Caco-2 (cell line): ENCODE measurements at regions of chr2 and their contacts with region 1.

Region 1: GRCh38 chr2:109128048-109128465 is 948 bp upstream of the SH3RF3 start:
- DNase-seq: peak; percentile 76 to 88
- H3K4me3 ChIP-seq: peak overlapping the region; percentile 64
- H3K4me3 Mint-ChIP-seq: peak overlapping the region; percentile 84
- H3K27ac Mint-ChIP-seq: no peak overlapping the region
- H3K4me1 ChIP-seq: no peaks in the 10 kb centered on the region; the same call in 1 of the 2 replicates
- H3K4me1 Mint-ChIP-seq: no peaks in the 10 kb centered on the region
- H3K27me3 ChIP-seq: peaks cover 5% of the 10 kb centered on the region
- H3K27me3 Mint-ChIP-seq: peaks cover 8% of the 10 kb centered on the region
- CTCF ChIP-seq: peak; percentile 91

Region 2: GRCh38 chr2:107776362-107776761 is 1351.7 kb before region 1 on chr2:
- CTCF ChIA-PET with region 1: no interaction called
- POLR2A ChIA-PET with region 1: no interaction called
- intact Hi-C with region 1: no loop called
- DNase-seq: no peak
- H3K4me3 ChIP-seq: no peak overlapping the region
- H3K4me3 Mint-ChIP-seq: no peak overlapping the region
- H3K27ac Mint-ChIP-seq: no peak overlapping the region
- H3K4me1 ChIP-seq: no peaks in the 10 kb centered on the region
- H3K4me1 Mint-ChIP-seq: no peaks in the 10 kb centered on the region
- H3K27me3 ChIP-seq: no peaks in the 10 kb centered on the region
- H3K27me3 Mint-ChIP-seq: peaks cover 14% of the 10 kb centered on the region
- CTCF ChIP-seq: no peak

Region 3: DNA sequence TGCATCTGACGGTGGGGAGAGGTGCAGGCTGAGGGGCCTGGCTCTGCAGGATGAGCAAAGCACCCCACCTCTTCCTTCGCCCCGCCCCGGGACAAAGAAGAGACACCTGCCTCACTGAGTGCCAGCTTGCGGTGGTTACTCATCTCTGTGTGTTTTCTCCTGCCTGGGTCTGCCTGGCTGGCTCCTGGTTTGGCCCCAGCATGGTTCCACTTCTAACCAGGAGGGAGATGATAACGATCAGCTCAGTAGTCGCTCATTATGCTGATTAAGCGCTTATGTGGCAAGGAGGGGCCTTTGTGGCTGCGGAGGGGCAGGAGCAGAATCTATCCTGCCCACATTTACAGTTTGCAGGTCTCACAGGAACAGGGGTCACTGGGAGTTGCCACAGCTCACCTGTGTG is 70.4 kb before region 1 on chr2:
- CTCF ChIA-PET with region 1: no interaction called
- POLR2A ChIA-PET with region 1: no interaction called
- intact Hi-C with region 1: no loop called
- DNase-seq: no peak
- H3K4me3 ChIP-seq: no peak overlapping the region
- H3K4me3 Mint-ChIP-seq: no peak overlapping the region
- H3K27ac Mint-ChIP-seq: no peak overlapping the region
- H3K4me1 ChIP-seq: peaks cover 25% of the 10 kb centered on the region
- H3K4me1 Mint-ChIP-seq: peaks cover 23% of the 10 kb centered on the region
- H3K27me3 ChIP-seq: no peaks in the 10 kb centered on the region
- H3K27me3 Mint-ChIP-seq: no peaks in the 10 kb centered on the region
- CTCF ChIP-seq: no peak

Region 4: DNA sequence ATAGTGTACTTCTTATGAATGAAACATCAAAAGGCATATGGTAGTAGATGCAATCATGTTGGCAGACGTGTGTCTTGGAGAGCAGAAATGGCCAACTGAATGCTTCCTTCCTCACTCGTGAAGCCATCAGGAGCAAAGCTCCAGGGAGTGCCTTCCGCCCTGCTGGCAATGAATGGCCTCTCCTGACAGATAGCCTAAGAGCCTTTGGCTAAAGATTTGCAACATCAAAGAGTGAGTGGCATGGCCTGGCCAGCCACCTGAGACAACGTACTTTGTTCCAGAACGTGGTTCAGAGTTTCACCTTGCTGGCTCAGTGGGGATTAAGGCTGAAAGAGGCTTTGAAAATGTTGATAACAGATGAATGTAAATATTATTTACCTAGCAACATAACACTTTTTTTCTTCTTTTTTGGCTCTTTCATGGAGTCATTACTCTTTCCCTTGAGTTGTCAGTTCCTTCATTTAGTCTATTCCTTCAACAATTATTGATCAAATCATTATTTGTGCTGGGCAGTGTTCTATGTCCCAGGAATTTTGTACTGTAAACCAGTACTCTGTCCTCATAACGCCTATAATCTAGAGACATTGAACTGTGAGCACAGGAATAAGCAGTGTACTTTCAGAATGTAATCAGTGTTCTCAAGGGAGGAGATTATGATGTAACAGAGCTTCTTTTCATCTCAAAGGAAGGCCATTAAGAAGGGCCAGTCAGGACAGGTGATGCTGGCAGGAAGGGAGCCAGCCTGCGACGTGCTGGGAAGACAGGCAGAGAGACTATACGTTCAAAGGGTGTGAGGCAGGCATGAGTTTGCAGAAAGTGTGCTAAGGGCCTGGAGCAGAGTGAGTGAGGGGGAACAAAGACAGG is 58.5 kb before region 1 on chr2:
- CTCF ChIA-PET with region 1: no interaction called
- POLR2A ChIA-PET with region 1: no interaction called
- intact Hi-C with region 1: loop called (anchors 1 kb)
- DNase-seq: peak; percentile 90 to 94
- H3K4me3 ChIP-seq: no peak overlapping the region
- H3K4me3 Mint-ChIP-seq: peak overlapping the region; percentile 65
- H3K27ac Mint-ChIP-seq: peak overlapping the region; percentile 97
- H3K4me1 ChIP-seq: peaks cover 58% of the 10 kb centered on the region
- H3K4me1 Mint-ChIP-seq: peaks cover 34% of the 10 kb centered on the region
- H3K27me3 ChIP-seq: no peaks in the 10 kb centered on the region
- H3K27me3 Mint-ChIP-seq: no peaks in the 10 kb centered on the region
- CTCF ChIP-seq: no peak

Region 5: GRCh38 chr2:109208081-109208950 is 80.3 kb after region 1 on chr2:
- CTCF ChIA-PET with region 1: interaction called, 3 read pairs
- POLR2A ChIA-PET with region 1: no interaction called
- intact Hi-C with region 1: loop called (anchors 1 kb)
- DNase-seq: no peak
- H3K4me3 ChIP-seq: no peak overlapping the region
- H3K4me3 Mint-ChIP-seq: no peak overlapping the region
- H3K27ac Mint-ChIP-seq: no peak overlapping the region
- H3K4me1 ChIP-seq: peaks cover 14% of the 10 kb centered on the region
- H3K4me1 Mint-ChIP-seq: peaks cover 11% of the 10 kb centered on the region
- H3K27me3 ChIP-seq: no peaks in the 10 kb centered on the region
- H3K27me3 Mint-ChIP-seq: peaks cover 11% of the 10 kb centered on the region
- CTCF ChIP-seq: no peak

Region 6: DNA sequence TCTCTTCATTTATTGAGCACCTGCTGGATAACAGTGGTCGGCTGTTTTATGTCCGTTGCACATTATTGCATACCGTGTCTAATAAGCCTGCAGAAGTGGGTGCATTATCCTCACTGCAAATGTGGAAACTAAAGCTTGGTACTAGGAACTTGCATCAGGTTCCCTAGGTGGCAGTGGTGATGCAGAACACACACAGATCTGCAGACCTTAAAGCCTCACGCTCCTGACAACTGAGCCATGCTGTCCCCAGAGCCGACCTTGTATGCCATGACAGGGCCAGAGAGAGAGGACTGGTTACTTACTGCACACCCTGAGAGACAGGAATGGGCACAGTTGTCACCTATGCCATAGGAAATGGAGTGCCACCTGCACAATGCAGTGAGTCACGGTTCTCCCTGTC is 152.7 kb after region 1 on chr2:
- CTCF ChIA-PET with region 1: no interaction called
- POLR2A ChIA-PET with region 1: no interaction called
- intact Hi-C with region 1: loop called (anchors 1 kb)
- DNase-seq: no peak
- H3K4me3 ChIP-seq: no peak overlapping the region
- H3K4me3 Mint-ChIP-seq: no peak overlapping the region
- H3K27ac Mint-ChIP-seq: no peak overlapping the region
- H3K4me1 ChIP-seq: peaks cover 4% of the 10 kb centered on the region; the same call in 1 of the 2 replicates
- H3K4me1 Mint-ChIP-seq: no peaks in the 10 kb centered on the region
- H3K27me3 ChIP-seq: peaks cover 3% of the 10 kb centered on the region
- H3K27me3 Mint-ChIP-seq: peaks cover 10% of the 10 kb centered on the region
- CTCF ChIP-seq: no peak

Region 7: GRCh38 chr2:109396202-109397180 is 268.4 kb after region 1 on chr2:
- CTCF ChIA-PET with region 1: no interaction called
- POLR2A ChIA-PET with region 1: no interaction called
- intact Hi-C with region 1: loop called (anchors 2 kb)
- DNase-seq: peak in 1 of 2 experiments; percentile 32
- H3K4me3 ChIP-seq: no peak overlapping the region
- H3K4me3 Mint-ChIP-seq: no peak overlapping the region
- H3K27ac Mint-ChIP-seq: no peak overlapping the region
- H3K4me1 ChIP-seq: 0 out of 2 replicates have a peak, but pooled peaks cover 3% of the 10 kb centered on the region
- H3K4me1 Mint-ChIP-seq: peaks cover 6% of the 10 kb centered on the region
- H3K27me3 ChIP-seq: no peaks in the 10 kb centered on the region
- H3K27me3 Mint-ChIP-seq: peaks cover 5% of the 10 kb centered on the region
- CTCF ChIP-seq: peak in 1 of 2 experiments; percentile 6

Region 8: GRCh38 chr2:109497463-109497862 is 369.4 kb after region 1 on chr2:
- CTCF ChIA-PET with region 1: no interaction called
- POLR2A ChIA-PET with region 1: no interaction called
- intact Hi-C with region 1: loop called (anchors 2 kb)
- DNase-seq: no peak
- H3K4me3 ChIP-seq: no peak overlapping the region
- H3K4me3 Mint-ChIP-seq: no peak overlapping the region
- H3K27ac Mint-ChIP-seq: no peak overlapping the region
- H3K4me1 ChIP-seq: no peaks in the 10 kb centered on the region
- H3K4me1 Mint-ChIP-seq: peaks cover 7% of the 10 kb centered on the region
- H3K27me3 ChIP-seq: no peaks in the 10 kb centered on the region
- H3K27me3 Mint-ChIP-seq: peaks cover 3% of the 10 kb centered on the region
- CTCF ChIP-seq: no peak

Region 9: GRCh38 chr2:109510136-109511028 is 382.3 kb after region 1 on chr2:
- CTCF ChIA-PET with region 1: interaction called, 4 read pairs
- POLR2A ChIA-PET with region 1: no interaction called
- intact Hi-C with region 1: loop called (anchors 1 kb)
- DNase-seq: peak; percentile 79 to 80
- H3K4me3 ChIP-seq: no peak overlapping the region
- H3K4me3 Mint-ChIP-seq: no peak overlapping the region
- H3K27ac Mint-ChIP-seq: no peak overlapping the region
- H3K4me1 ChIP-seq: no peaks in the 10 kb centered on the region
- H3K4me1 Mint-ChIP-seq: no peaks in the 10 kb centered on the region
- H3K27me3 ChIP-seq: no peaks in the 10 kb centered on the region
- H3K27me3 Mint-ChIP-seq: no peaks in the 10 kb centered on the region
- CTCF ChIP-seq: peak; percentile 89 to 98